GM12878 (cell line): ENCODE measurements at regions of chr2 and their contacts with region 1.

Region 1: GRCh38 chr2:43611987-43612894 is 16.4 kb upstream of the THADA start:
- DNase-seq: peak; percentile 17
- ATAC-seq: peak; percentile 97
- H3K4me3 ChIP-seq: no peak overlapping the region
- H3K27ac ChIP-seq: no peak overlapping the region
- H3K4me1 ChIP-seq: no peaks in the 10 kb centered on the region
- H3K27me3 ChIP-seq: no peaks in the 10 kb centered on the region; a peak in 1 of 4 replicates
- CTCF ChIP-seq: peak; percentile 78 to 85 (median 84)
- EP300 ChIP-seq: no peak
- POLR2A ChIP-seq: no peak
- RAD21 ChIP-seq: peak; percentile 64

Region 2: GRCh38 chr2:43133708-43134570 is 478.3 kb before region 1 on chr2:
- CTCF ChIA-PET with region 1: no interaction called
- POLR2A ChIA-PET with region 1: no interaction called
- RAD21 ChIA-PET with region 1: no interaction called
- SMC1A ChIA-PET with region 1: no interaction called
- in situ Hi-C with region 1: no loop called
- intact Hi-C with region 1: no loop called
- DNase-seq: no peak
- ATAC-seq: peak; percentile 60
- H3K4me3 ChIP-seq: no peak overlapping the region
- H3K27ac ChIP-seq: peak overlapping the region; percentile 30; the same call in 1 of the 2 replicates
- H3K4me1 ChIP-seq: peaks cover 57% of the 10 kb centered on the region
- H3K27me3 ChIP-seq: no peaks in the 10 kb centered on the region
- CTCF ChIP-seq: 0 out of 6 replicates have a peak, but pooled peaks of 1 of the 3 experiments have one; percentile 1
- EP300 ChIP-seq: no peak
- POLR2A ChIP-seq: no peak
- RAD21 ChIP-seq: 0 out of 2 replicates have a peak, but pooled peaks have one; percentile 2

Region 3: GRCh38 chr2:43585708-43586107 is 26.5 kb before region 1 on chr2:
- CTCF ChIA-PET with region 1: no interaction called
- POLR2A ChIA-PET with region 1: no interaction called
- RAD21 ChIA-PET with region 1: no interaction called
- SMC1A ChIA-PET with region 1: no interaction called
- in situ Hi-C with region 1: no loop called
- intact Hi-C with region 1: no loop called
- DNase-seq: no peak
- ATAC-seq: no peak
- H3K4me3 ChIP-seq: no peak overlapping the region
- H3K27ac ChIP-seq: no peak overlapping the region
- H3K4me1 ChIP-seq: no peaks in the 10 kb centered on the region
- H3K27me3 ChIP-seq: no peaks in the 10 kb centered on the region
- CTCF ChIP-seq: no peak
- EP300 ChIP-seq: no peak
- POLR2A ChIP-seq: no peak
- RAD21 ChIP-seq: no peak

Region 4: DNA sequence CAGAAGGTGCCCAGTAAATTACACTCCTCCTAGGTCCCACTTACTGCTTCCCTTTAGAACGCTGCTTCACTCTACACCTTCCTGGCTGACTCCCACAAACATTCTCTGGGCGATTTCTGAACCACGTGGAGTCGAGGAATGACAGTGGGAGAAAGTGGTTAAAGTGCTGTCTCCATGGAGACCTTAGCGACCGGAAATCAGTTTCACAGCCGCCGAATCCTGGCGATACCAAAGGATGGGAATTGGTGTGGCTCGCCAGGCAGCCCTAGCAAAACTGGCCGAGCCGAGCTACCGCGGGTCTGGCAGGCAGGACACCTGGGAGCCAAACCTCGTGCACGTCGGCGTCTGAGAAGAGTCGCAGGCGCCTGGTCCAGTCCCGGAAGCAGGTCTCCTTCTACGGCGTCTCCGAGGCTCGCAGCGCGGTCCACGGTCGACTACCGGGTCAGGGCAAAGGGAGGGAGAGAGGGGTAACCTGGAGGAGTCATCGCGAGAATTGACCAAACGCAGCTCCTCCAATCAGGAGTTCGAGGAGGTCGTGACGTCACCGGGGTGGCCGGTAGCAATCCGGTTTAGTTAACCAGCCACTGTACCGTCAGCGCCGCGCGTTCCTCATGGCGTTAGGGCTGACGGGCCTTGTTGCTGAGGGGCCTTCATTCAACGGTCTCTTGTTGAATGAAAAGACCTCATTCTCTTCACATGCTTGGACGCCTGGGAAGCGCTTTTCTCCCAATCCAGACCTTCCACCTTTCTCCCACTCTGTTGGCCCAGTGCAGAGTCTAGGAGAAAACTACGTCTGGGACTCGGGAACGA is 16.4 kb before region 1 on chr2 and contains the start of gene THADA:
- CTCF ChIA-PET with region 1: interaction called, 11 read pairs
- POLR2A ChIA-PET with region 1: interaction called, 3 read pairs
- RAD21 ChIA-PET with region 1: no interaction called
- SMC1A ChIA-PET with region 1: interaction called, 5 read pairs
- in situ Hi-C with region 1: no loop called
- intact Hi-C with region 1: no loop called
- DNase-seq: peak; percentile 98
- ATAC-seq: peak; percentile 98
- H3K4me3 ChIP-seq: peak within 1 kb of the TSS; percentile 80
- H3K27ac ChIP-seq: peak within 1 kb of the TSS; percentile 94
- H3K4me1 ChIP-seq: peaks cover 3% of the 10 kb centered on the region; the same call in 1 of the 2 replicates
- H3K27me3 ChIP-seq: no peaks in the 10 kb centered on the region
- CTCF ChIP-seq: no peak
- EP300 ChIP-seq: no peak
- POLR2A ChIP-seq: peak; percentile 99
- RAD21 ChIP-seq: no peak
- polyA plus RNA-seq, gene THADA: 17.0 to 17.5 TPM

Region 5: DNA sequence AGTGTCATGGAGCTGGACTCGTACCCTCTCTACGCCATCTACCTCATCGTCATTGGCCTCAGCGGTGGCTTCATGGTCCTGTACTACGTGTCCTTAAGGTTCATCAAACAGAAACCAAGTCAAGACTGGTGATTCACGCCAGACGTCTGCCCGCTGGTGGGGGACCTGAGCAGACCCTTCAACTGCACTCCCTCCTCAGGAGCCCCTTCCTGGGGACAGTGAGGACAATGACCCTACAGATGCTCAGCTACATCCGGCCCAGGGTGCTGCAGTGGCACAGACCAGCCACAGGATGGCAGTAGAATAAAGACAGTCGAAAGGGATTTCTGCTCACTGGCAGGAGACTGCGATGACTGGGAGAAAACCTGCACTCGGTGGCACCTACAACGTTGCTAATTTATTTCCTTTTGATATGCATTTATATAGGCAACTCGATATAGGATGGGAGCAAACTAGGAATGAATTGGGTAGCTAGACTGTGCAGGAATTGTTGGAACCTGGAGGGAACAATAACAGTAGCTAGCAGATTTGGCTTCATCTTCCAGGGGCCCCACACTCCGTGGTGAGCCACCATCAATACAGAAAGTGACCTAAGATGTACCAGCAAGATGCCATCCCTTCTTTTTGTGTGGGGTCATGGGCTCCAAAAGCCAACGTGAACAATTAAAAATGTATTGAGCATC is 265.7 kb after region 1 on chr2:
- CTCF ChIA-PET with region 1: interaction called, 3 read pairs
- POLR2A ChIA-PET with region 1: no interaction called
- RAD21 ChIA-PET with region 1: no interaction called
- SMC1A ChIA-PET with region 1: no interaction called
- in situ Hi-C with region 1: no loop called
- intact Hi-C with region 1: loop called (anchors 1 kb)
- DNase-seq: peak; percentile 15
- ATAC-seq: peak; percentile 94
- H3K4me3 ChIP-seq: no peak overlapping the region
- H3K27ac ChIP-seq: no peak overlapping the region
- H3K4me1 ChIP-seq: no peaks in the 10 kb centered on the region
- H3K27me3 ChIP-seq: no peaks in the 10 kb centered on the region; a peak in 1 of 4 replicates
- CTCF ChIP-seq: peak; percentile 91 to 98 (median 95); a peak in 5 of 6 replicates
- EP300 ChIP-seq: no peak
- POLR2A ChIP-seq: no peak
- RAD21 ChIP-seq: peak; percentile 85